ENCODE measurements at regions of chr5 and their contacts with region 1.

Region 1: GRCh38 chr5:41193456-41194205 is 19.7 kb downstream of the C6 start:
- DNase-seq: peak; percentile 96
- H3K4me3 ChIP-seq: no peak overlapping the region
- H3K27ac ChIP-seq: peak overlapping the region in 1 of 2 donors; percentile 74
- H3K4me1 ChIP-seq: no peaks in the 10 kb centered on the region
- H3K27me3 ChIP-seq: no peaks in the 10 kb centered on the region
- CTCF ChIP-seq: no peak
- POLR2A ChIP-seq: no peak

Region 2: GRCh38 chr5:41264019-41264418 is 70.4 kb after region 1 on chr5:
- intact Hi-C with region 1: loop called (anchors 10 kb)
- DNase-seq: no peak
- H3K4me3 ChIP-seq: no peak overlapping the region
- H3K27ac ChIP-seq: peak overlapping the region; percentile 39 to 62
- H3K4me1 ChIP-seq: peaks cover 19% of the 10 kb centered on the region
- H3K27me3 ChIP-seq: no peaks in the 10 kb centered on the region
- CTCF ChIP-seq: no peak
- POLR2A ChIP-seq: no peak

Region 3: GRCh38 chr5:41524174-41524573 is 330.5 kb after region 1 on chr5:
- intact Hi-C with region 1: no loop called
- DNase-seq: no peak
- H3K4me3 ChIP-seq: no peak overlapping the region
- H3K27ac ChIP-seq: no peak overlapping the region
- H3K4me1 ChIP-seq: peaks cover 7% of the 10 kb centered on the region
- H3K27me3 ChIP-seq: no peaks in the 10 kb centered on the region
- CTCF ChIP-seq: peak in 1 of 3 experiments; percentile 11
- POLR2A ChIP-seq: no peak

Measured in testis (tissue), 5 donors.